A549 (cell line): ENCODE measurements at regions of chr11 and their contacts with region 1.

Region 1: GRCh38 chr11:47784785-47785381 is 17.7 kb upstream of the FNBP4 start:
- DNase-seq: no peak
- ATAC-seq: no peak
- H3K4me3 ChIP-seq: no peak overlapping the region
- H3K27ac ChIP-seq: no peak overlapping the region
- H3K4me1 ChIP-seq: no peaks in the 10 kb centered on the region
- CTCF ChIP-seq: no peak
- EP300 ChIP-seq: no peak
- POLR2A ChIP-seq: no peak
- RAD21 ChIP-seq: no peak

Region 2: GRCh38 chr11:47672283-47672730 is 112.6 kb before region 1 on chr11:
- CTCF ChIA-PET with region 1: no interaction called
- POLR2A ChIA-PET with region 1: no interaction called
- DNase-seq: peak in 1 of 2 experiments; percentile 57
- ATAC-seq: peak in 1 of 2 experiments; percentile 47; a peak in 3 of 6 replicates
- H3K4me3 ChIP-seq: no peak overlapping the region
- H3K27ac ChIP-seq: peak overlapping the region; percentile 13 to 38; a peak in 3 of 6 replicates
- H3K4me1 ChIP-seq: peaks cover 15% of the 10 kb centered on the region
- CTCF ChIP-seq: no peak
- EP300 ChIP-seq: no peak
- POLR2A ChIP-seq: no peak
- RAD21 ChIP-seq: no peak

Region 3: DNA sequence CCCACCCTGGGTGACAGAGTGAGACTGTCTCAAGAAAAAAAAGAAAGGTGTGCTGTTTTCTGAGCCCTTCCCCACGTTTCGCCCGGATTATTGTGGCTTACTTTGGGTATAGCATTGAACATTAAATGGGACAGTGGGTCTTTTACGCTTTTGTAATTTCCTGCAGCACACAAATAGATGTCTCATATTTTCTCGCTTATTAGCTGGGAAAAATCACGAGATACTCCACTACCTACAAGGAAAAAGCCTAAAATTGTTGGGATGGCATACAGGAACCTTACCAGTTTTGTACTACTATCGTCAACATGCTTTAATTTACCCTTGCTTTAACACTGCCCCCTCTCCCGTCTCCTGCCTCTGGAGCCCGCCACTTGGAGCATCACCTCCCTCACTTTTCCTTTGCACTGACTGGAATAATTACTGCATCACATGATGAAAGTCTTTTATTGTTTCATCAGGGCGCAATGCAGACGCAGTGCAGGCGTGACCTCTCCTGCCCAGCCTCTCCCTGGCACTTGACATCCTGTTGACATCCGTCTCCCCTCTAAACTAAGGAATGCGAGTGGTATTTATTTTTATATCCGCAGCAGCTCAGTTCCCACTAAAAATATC is 16.8 kb before region 1 on chr11:
- CTCF ChIA-PET with region 1: interaction called, 10 read pairs
- POLR2A ChIA-PET with region 1: no interaction called
- DNase-seq: peak; percentile 66 to 82
- ATAC-seq: peak; percentile 37 to 51
- H3K4me3 ChIP-seq: peak overlapping the region; percentile 60
- H3K27ac ChIP-seq: peak overlapping the region; percentile 91 to 92
- H3K4me1 ChIP-seq: peaks cover 16% of the 10 kb centered on the region
- CTCF ChIP-seq: no peak
- EP300 ChIP-seq: no peak
- POLR2A ChIP-seq: peak; percentile 45
- RAD21 ChIP-seq: no peak